CD4-positive, alpha-beta memory T cell (primary cell): ENCODE measurements at regions of chr6 and their contacts with region 1.

Region 1: GRCh38 chr6:78954740-78955139 is 87.4 kb downstream of the IRAK1BP1 start:
- DNase-seq: no peak
- H3K4me3 ChIP-seq: no peak overlapping the region
- H3K4me3 Mint-ChIP-seq: no peak overlapping the region
- H3K27ac ChIP-seq: no peak overlapping the region
- H3K27ac Mint-ChIP-seq: no peak overlapping the region
- H3K4me1 ChIP-seq: no peaks in the 10 kb centered on the region
- H3K4me1 Mint-ChIP-seq: peaks cover 0 to 5% (median 0%) of the 10 kb centered on the region in 4 donors
- H3K27me3 ChIP-seq: no peaks in the 10 kb centered on the region
- H3K27me3 Mint-ChIP-seq: no peaks in the 10 kb centered on the region

Region 2: DNA sequence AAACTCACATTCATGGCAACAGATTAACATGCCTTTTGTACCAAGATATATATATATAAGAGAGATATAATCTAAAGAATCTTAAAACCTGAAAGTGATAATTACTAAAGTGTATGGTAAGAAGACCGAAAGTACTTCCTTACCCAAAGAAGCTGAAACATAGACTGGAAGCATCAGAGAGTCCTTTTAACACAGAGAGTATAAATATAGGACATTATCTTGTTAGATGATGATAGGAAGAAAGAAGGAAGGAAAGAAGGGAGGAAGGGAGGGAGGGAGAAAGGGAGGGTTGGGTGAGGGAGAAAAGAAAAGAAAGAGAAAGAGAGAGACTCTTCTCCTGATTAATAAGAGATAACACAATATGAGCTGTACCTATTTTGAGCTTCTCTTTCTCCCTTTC is 55.1 kb after region 1 on chr6:
- CTCF ChIA-PET with region 1: no interaction called
- POLR2A ChIA-PET with region 1: no interaction called
- intact Hi-C with region 1: loop called (anchors 5 kb)
- DNase-seq: no peak
- H3K4me3 ChIP-seq: no peak overlapping the region
- H3K4me3 Mint-ChIP-seq: no peak overlapping the region
- H3K27ac ChIP-seq: no peak overlapping the region
- H3K27ac Mint-ChIP-seq: peak overlapping the region in 1 of 7 donors; percentile 34
- H3K4me1 ChIP-seq: no peaks in the 10 kb centered on the region
- H3K4me1 Mint-ChIP-seq: peaks cover 5 to 13% (median 9%) of the 10 kb centered on the region in 4 donors
- H3K27me3 ChIP-seq: no peaks in the 10 kb centered on the region
- H3K27me3 Mint-ChIP-seq: no peaks in the 10 kb centered on the region